PC-3 (cell line): ENCODE measurements at regions of chr10 and their contacts with region 1.

Region 1: GRCh38 chr10:14971867-14972448 is 12.8 kb downstream of the MEIG1 start:
- DNase-seq: peak; percentile 13
- ATAC-seq: no peak
- H3K4me3 ChIP-seq: no peak overlapping the region
- H3K27ac ChIP-seq: no peak overlapping the region
- H3K4me1 ChIP-seq: no peaks in the 10 kb centered on the region
- H3K27me3 ChIP-seq: no peaks in the 10 kb centered on the region
- CTCF ChIP-seq: peak; percentile 50

Region 2: GRCh38 chr10:14191871-14192270 is 780.1 kb before region 1 on chr10:
- CTCF ChIA-PET with region 1: no interaction called
- POLR2A ChIA-PET with region 1: no interaction called
- intact Hi-C with region 1: loop called (anchors 10 kb)
- DNase-seq: no peak
- ATAC-seq: no peak
- H3K4me3 ChIP-seq: no peak overlapping the region
- H3K27ac ChIP-seq: no peak overlapping the region
- H3K4me1 ChIP-seq: no peaks in the 10 kb centered on the region
- H3K27me3 ChIP-seq: peaks cover 10% of the 10 kb centered on the region; the same call in 1 of the 2 replicates
- CTCF ChIP-seq: no peak